AG04450 (cell line): ENCODE measurements at regions of chr15 and their contacts with region 1.

Region 1: GRCh38 chr15:44195151-44195740 is at the start of gene FRMD5:
- DNase-seq: peak; percentile 92
- H3K4me3 ChIP-seq: peak within 1 kb of the TSS; percentile 76
- H3K27ac ChIP-seq: peak within 1 kb of the TSS; percentile 61
- H3K27me3 ChIP-seq: no peaks in the 10 kb centered on the region
- CTCF ChIP-seq: peak; percentile 70
- polyA plus RNA-seq, gene FRMD5: 5.2 and 5.4 TPM in 2 replicates

Region 2: GRCh38 chr15:43903864-43904290 is 291.4 kb before region 1 on chr15:
- CTCF ChIA-PET with region 1: interaction called, 13 read pairs
- POLR2A ChIA-PET with region 1: no interaction called
- DNase-seq: peak; percentile 26
- H3K4me3 ChIP-seq: no peak overlapping the region
- H3K27ac ChIP-seq: no peak overlapping the region
- H3K27me3 ChIP-seq: no peaks in the 10 kb centered on the region
- CTCF ChIP-seq: peak; percentile 89

Region 3: GRCh38 chr15:44177139-44177538 is 18.1 kb before region 1 on chr15:
- CTCF ChIA-PET with region 1: no interaction called
- POLR2A ChIA-PET with region 1: no interaction called
- DNase-seq: no peak
- H3K4me3 ChIP-seq: no peak overlapping the region
- H3K27ac ChIP-seq: no peak overlapping the region
- H3K27me3 ChIP-seq: no peaks in the 10 kb centered on the region
- CTCF ChIP-seq: no peak

Region 4: DNA sequence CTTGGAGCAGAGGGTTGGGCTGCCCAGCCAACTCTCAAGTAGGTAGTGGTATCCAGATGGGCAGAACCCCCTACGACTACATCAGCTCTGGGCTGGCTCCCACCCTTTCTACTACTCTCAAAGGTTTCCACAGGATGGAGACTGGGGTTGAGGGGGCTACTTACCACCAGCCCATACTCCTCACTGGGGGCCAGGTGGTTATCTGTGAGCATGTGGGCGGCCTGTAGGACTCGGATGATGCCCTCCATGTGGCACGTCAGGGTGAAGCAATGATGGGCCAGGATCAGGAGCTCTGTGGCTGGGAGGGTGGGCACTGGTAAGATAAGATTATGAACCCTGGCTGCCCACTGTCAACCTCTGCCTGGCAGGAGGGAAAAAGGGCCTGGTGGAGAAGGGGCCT is 375.1 kb after region 1 on chr15:
- CTCF ChIA-PET with region 1: no interaction called
- POLR2A ChIA-PET with region 1: interaction called, 11 read pairs
- DNase-seq: no peak
- H3K4me3 ChIP-seq: no peak overlapping the region
- H3K27ac ChIP-seq: no peak overlapping the region
- H3K27me3 ChIP-seq: no peaks in the 10 kb centered on the region
- CTCF ChIP-seq: no peak